ENCODE measurements at regions of chr11 and their contacts with region 1.

Region 1: GRCh38 chr11:128624269-128625175 is 37.2 kb upstream of the ETS1 start:
- DNase-seq: peak; percentile 51 to 88 (median 67)
- ATAC-seq: peak; percentile 72
- H3K4me3 ChIP-seq: peak overlapping the region; percentile 6 to 18
- H3K4me3 Mint-ChIP-seq: peak overlapping the region; percentile 56
- H3K27ac ChIP-seq: peak overlapping the region; percentile 48 to 83
- H3K27ac Mint-ChIP-seq: peak overlapping the region; percentile 98
- H3K4me1 ChIP-seq: peaks cover 91% of the 10 kb centered on the region
- H3K4me1 Mint-ChIP-seq: peaks cover 99% of the 10 kb centered on the region
- H3K27me3 ChIP-seq: no peaks in the 10 kb centered on the region
- H3K27me3 Mint-ChIP-seq: no peaks in the 10 kb centered on the region
- CTCF ChIP-seq: no peak

Region 2: GRCh38 chr11:128052912-128053641 is 571.4 kb before region 1 on chr11:
- CTCF ChIA-PET with region 1: no interaction called
- POLR2A ChIA-PET with region 1: no interaction called
- intact Hi-C with region 1: loop called in 1 of 2 experiments (anchors 5 kb)
- DNase-seq: peak in 2 of 9 experiments; percentile 53 to 79
- ATAC-seq: peak; percentile 62
- H3K4me3 ChIP-seq: peak overlapping the region in 1 of 2 experiments; percentile 21
- H3K4me3 Mint-ChIP-seq: peak overlapping the region; percentile 67
- H3K27ac ChIP-seq: peak overlapping the region in 1 of 2 experiments; percentile 79
- H3K27ac Mint-ChIP-seq: peak overlapping the region; percentile 91
- H3K4me1 ChIP-seq: peaks cover 66% of the 10 kb centered on the region
- H3K4me1 Mint-ChIP-seq: peaks cover 82% of the 10 kb centered on the region
- H3K27me3 ChIP-seq: no peaks in the 10 kb centered on the region
- H3K27me3 Mint-ChIP-seq: no peaks in the 10 kb centered on the region
- CTCF ChIP-seq: no peak

Region 3: DNA sequence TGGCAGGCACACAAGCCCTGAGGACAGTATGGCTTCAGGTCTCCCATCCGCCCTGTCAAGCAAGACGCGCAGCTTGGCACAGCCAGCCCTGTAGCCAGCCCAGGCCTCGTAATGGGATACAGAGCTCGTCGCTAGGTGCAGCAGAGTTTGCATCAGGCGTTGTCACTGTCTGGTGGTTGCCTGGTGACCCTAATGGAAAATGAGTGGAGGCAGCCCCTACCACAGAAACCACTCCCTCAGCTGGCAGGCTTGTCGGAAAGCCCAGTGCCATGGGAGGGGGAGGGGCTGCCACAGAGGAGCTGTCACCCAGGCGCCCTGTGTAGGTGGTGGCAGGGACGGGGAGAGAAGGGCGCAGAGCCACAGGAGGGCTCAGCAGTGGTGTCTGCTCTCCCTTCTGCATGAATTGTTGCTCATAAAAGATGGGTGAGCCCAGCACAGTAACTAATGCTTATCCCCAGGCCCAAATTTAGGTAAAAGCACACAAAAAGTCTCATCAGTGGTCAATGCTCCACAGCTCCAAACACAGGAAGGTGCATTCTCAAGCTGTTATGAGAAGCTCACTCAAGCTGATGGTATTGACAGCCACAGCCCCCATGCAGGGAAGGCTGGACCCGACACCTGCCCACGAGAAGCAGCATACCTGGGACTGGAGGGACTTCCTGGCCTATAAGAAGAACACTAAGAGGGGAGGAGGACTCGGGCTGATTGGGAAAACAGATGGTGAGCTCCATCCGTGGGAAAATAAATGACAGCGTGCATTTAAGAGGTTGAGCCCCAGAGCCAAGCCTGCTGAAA is 201.7 kb before region 1 on chr11:
- CTCF ChIA-PET with region 1: no interaction called
- POLR2A ChIA-PET with region 1: no interaction called
- intact Hi-C with region 1: no loop called
- DNase-seq: peak; percentile 70 to 95 (median 87)
- ATAC-seq: peak; percentile 95
- H3K4me3 ChIP-seq: peak overlapping the region in 1 of 2 experiments; percentile 0
- H3K4me3 Mint-ChIP-seq: peak overlapping the region; percentile 53
- H3K27ac ChIP-seq: peak overlapping the region; percentile 18 to 41
- H3K27ac Mint-ChIP-seq: peak overlapping the region; percentile 97
- H3K4me1 ChIP-seq: peaks cover 41% of the 10 kb centered on the region
- H3K4me1 Mint-ChIP-seq: peaks cover 51% of the 10 kb centered on the region
- H3K27me3 ChIP-seq: no peaks in the 10 kb centered on the region
- H3K27me3 Mint-ChIP-seq: no peaks in the 10 kb centered on the region
- CTCF ChIP-seq: no peak

Region 4: GRCh38 chr11:128472128-128473089 is 152.1 kb before region 1 on chr11:
- CTCF ChIA-PET with region 1: interaction called, 62 read pairs
- POLR2A ChIA-PET with region 1: interaction called, 10 read pairs
- intact Hi-C with region 1: no loop called
- DNase-seq: peak in 5 of 9 experiments; percentile 46 to 81 (median 63)
- ATAC-seq: peak; percentile 33
- H3K4me3 ChIP-seq: peak overlapping the region; percentile 4 to 33
- H3K4me3 Mint-ChIP-seq: peak overlapping the region; percentile 74
- H3K27ac ChIP-seq: peak overlapping the region; percentile 68 to 88
- H3K27ac Mint-ChIP-seq: peak overlapping the region; percentile 94
- H3K4me1 ChIP-seq: peaks cover 99% of the 10 kb centered on the region
- H3K4me1 Mint-ChIP-seq: peaks cover 99% of the 10 kb centered on the region
- H3K27me3 ChIP-seq: no peaks in the 10 kb centered on the region
- H3K27me3 Mint-ChIP-seq: no peaks in the 10 kb centered on the region
- CTCF ChIP-seq: no peak

Region 5: DNA sequence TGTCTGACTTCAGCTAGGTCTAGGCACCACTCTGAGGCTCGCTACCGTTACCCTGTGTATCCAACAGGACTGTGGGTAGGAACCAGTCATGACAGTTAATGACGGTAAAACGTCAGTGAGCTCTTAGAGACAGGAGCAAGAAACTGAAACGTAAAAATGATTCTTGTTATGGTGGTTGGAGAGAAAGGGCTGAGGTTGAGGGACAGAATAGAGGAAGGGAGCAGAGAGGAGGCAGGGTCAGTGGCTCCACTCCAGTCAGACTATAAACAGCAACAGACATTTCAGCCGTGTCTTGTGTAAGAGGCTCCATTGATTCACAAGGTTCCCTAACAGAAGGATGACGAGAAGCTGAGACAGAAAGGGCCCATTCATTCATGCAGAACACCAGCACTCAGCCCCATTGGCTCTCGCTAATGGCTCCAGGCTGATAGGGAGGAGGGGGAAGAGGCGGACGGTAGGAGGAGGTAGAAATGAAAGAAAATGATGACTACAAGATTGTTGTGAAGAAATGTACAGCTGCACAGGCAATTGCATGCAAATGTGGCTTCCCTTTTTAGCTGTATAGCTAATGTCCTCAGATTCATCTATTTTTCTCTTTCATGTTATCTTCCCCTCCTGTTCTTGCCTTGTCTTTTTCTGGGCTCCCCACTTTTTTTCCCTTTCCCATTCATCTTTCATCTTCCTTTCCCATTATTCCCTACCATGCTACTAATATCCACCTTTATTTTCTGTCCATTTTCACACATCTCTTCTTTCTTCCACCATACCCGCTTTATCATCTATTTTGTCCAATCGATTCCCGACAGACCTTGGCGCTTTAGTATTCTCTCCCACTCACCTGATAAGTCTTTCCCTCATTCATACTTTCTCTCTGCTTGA is 71.5 kb before region 1 on chr11:
- CTCF ChIA-PET with region 1: interaction called, 10 read pairs
- POLR2A ChIA-PET with region 1: interaction called, 15 read pairs
- intact Hi-C with region 1: loop called (anchors 2 kb)
- DNase-seq: peak in 2 of 9 experiments; percentile 25 to 54
- ATAC-seq: no peak
- H3K4me3 ChIP-seq: no peak overlapping the region
- H3K4me3 Mint-ChIP-seq: peak overlapping the region; percentile 38
- H3K27ac ChIP-seq: peak overlapping the region; percentile 2 to 86
- H3K27ac Mint-ChIP-seq: peak overlapping the region; percentile 91
- H3K4me1 ChIP-seq: peaks cover 59% of the 10 kb centered on the region
- H3K4me1 Mint-ChIP-seq: peaks cover 60% of the 10 kb centered on the region
- H3K27me3 ChIP-seq: no peaks in the 10 kb centered on the region
- H3K27me3 Mint-ChIP-seq: no peaks in the 10 kb centered on the region
- CTCF ChIP-seq: no peak

Region 6: GRCh38 chr11:128610721-128611617 is 13.6 kb before region 1 on chr11:
- CTCF ChIA-PET with region 1: interaction called, 31 read pairs
- POLR2A ChIA-PET with region 1: interaction called, 20 read pairs
- intact Hi-C with region 1: loop called in 1 of 2 experiments (anchors 1 kb)
- DNase-seq: peak; percentile 50 to 87 (median 74)
- ATAC-seq: peak; percentile 88
- H3K4me3 ChIP-seq: peak overlapping the region in 1 of 2 experiments; percentile 9
- H3K4me3 Mint-ChIP-seq: peak overlapping the region; percentile 57
- H3K27ac ChIP-seq: peak overlapping the region; percentile 50 to 70
- H3K27ac Mint-ChIP-seq: peak overlapping the region; percentile 92
- H3K4me1 ChIP-seq: peaks cover 63% of the 10 kb centered on the region
- H3K4me1 Mint-ChIP-seq: peaks cover 87% of the 10 kb centered on the region
- H3K27me3 ChIP-seq: no peaks in the 10 kb centered on the region
- H3K27me3 Mint-ChIP-seq: no peaks in the 10 kb centered on the region
- CTCF ChIP-seq: no peak